Endothelial cell of umbilical vein (primary cell): ENCODE measurements at regions of chrX and their contacts with region 1.

Region 1: DNA sequence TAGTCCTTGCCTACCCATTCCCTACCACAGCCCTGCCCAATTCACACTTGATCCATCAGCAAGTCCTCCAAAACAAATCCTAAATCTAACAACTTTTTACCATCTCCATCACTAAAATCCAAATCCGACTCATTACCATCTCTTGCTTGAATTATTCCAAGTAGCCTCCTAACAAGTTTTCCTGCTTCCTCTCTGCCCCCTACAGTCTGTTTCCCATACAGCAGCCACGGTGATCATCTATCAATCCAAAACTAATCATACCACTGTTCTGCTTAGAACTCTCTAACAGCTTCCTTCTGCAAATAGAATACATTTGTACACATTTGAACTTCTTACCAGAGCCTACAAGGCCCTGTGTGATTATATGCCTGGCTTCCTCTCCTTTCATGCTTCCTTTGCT is 133.0 kb downstream of the SHROOM4 start:
- DNase-seq: peak; percentile 63
- H3K4me3 ChIP-seq: no peak overlapping the region
- H3K27ac ChIP-seq: no peak overlapping the region
- H3K4me1 ChIP-seq: peaks cover 31% of the 10 kb centered on the region
- H3K27me3 ChIP-seq: no peaks in the 10 kb centered on the region
- CTCF ChIP-seq: peak; percentile 39 to 54
- POLR2A ChIP-seq: no peak

Region 2: DNA sequence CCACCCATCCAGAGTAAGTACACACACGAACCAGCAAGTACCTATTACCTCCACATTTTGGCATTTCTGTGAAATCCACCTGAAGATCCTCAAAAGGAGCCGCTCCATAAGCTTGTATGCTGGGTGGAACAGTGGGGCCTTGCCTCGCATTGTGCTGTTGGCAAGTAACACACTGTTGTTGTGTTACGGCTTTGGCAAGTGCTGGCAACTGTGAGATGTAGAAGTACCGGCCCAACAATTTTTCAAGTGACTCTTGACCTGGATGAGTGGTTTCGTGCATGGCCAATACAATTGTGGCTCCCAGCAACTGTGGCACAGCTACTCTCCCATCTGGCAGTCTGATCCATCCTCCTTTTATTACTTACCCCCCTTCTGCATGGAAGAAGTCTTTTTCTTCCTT is 347.7 kb before region 1 on chrX:
- CTCF ChIA-PET with region 1: no interaction called
- POLR2A ChIA-PET with region 1: no interaction called
- dilution Hi-C with region 1: no loop called
- intact Hi-C with region 1: loop called (anchors 10 kb)
- DNase-seq: no peak
- H3K4me3 ChIP-seq: no peak overlapping the region
- H3K27ac ChIP-seq: no peak overlapping the region
- H3K4me1 ChIP-seq: no peaks in the 10 kb centered on the region
- H3K27me3 ChIP-seq: no peaks in the 10 kb centered on the region
- CTCF ChIP-seq: no peak
- POLR2A ChIP-seq: no peak

Region 3: GRCh38 chrX:50470103-50471031 is 210.6 kb before region 1 on chrX and contains the start of gene DGKK:
- CTCF ChIA-PET with region 1: no interaction called
- POLR2A ChIA-PET with region 1: no interaction called
- dilution Hi-C with region 1: no loop called
- intact Hi-C with region 1: loop called (anchors 10 kb)
- DNase-seq: no peak
- H3K4me3 ChIP-seq: no peak within 1 kb of the TSS
- H3K27ac ChIP-seq: no peak within 1 kb of the TSS
- H3K4me1 ChIP-seq: no peaks in the 10 kb centered on the region
- H3K27me3 ChIP-seq: peaks cover 41 to 55% of the 10 kb centered on the region in 2 experiments
- CTCF ChIP-seq: no peak
- POLR2A ChIP-seq: no peak
- total RNA-seq, gene DGKK: not detected in 2 replicates

Region 4: DNA sequence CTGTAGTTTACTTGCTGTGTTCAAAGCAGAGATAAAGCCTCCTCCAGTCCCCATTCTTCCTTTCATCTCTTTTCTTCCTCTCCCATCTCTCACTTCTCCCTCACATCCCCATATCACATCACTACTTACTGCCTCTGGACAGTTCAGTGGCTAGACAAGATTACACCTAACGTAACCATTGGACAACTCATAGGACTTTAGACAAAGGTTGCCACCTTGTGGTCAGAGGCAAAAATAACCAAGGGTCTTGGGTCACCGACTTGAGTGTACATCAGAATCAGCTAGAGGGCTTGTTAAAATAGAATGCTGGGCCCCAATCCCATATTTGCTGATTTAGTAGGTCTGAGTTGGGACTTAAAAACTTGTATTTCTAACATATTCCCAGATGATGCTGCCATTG is 101.0 kb before region 1 on chrX:
- CTCF ChIA-PET with region 1: interaction called, 17 read pairs
- POLR2A ChIA-PET with region 1: no interaction called
- dilution Hi-C with region 1: no loop called
- intact Hi-C with region 1: no loop called
- DNase-seq: peak; percentile 49
- H3K4me3 ChIP-seq: no peak overlapping the region
- H3K27ac ChIP-seq: no peak overlapping the region
- H3K4me1 ChIP-seq: no peaks in the 10 kb centered on the region
- H3K27me3 ChIP-seq: no peaks in the 10 kb centered on the region
- CTCF ChIP-seq: peak; percentile 34 to 35
- POLR2A ChIP-seq: no peak

Region 5: GRCh38 chrX:50594788-50595187 is 86.2 kb before region 1 on chrX:
- CTCF ChIA-PET with region 1: interaction called, 9 read pairs
- POLR2A ChIA-PET with region 1: no interaction called
- dilution Hi-C with region 1: no loop called
- intact Hi-C with region 1: loop called (anchors 2 kb)
- DNase-seq: peak; percentile 74
- H3K4me3 ChIP-seq: no peak overlapping the region
- H3K27ac ChIP-seq: peak overlapping the region; percentile 93
- H3K4me1 ChIP-seq: peaks cover 25% of the 10 kb centered on the region
- H3K27me3 ChIP-seq: no peaks in the 10 kb centered on the region
- CTCF ChIP-seq: no peak
- POLR2A ChIP-seq: no peak

Region 6: GRCh38 chrX:50606300-50606950 is 74.6 kb before region 1 on chrX:
- CTCF ChIA-PET with region 1: interaction called, 11 read pairs
- POLR2A ChIA-PET with region 1: no interaction called
- dilution Hi-C with region 1: no loop called
- intact Hi-C with region 1: loop called (anchors 2 kb)
- DNase-seq: no peak
- H3K4me3 ChIP-seq: no peak overlapping the region
- H3K27ac ChIP-seq: no peak overlapping the region
- H3K4me1 ChIP-seq: peaks cover 9% of the 10 kb centered on the region
- H3K27me3 ChIP-seq: no peaks in the 10 kb centered on the region
- CTCF ChIP-seq: no peak
- POLR2A ChIP-seq: no peak

Region 7: GRCh38 chrX:50643525-50644137 is 37.4 kb before region 1 on chrX:
- CTCF ChIA-PET with region 1: interaction called, 15 read pairs
- POLR2A ChIA-PET with region 1: interaction called, 3 read pairs
- dilution Hi-C with region 1: no loop called
- intact Hi-C with region 1: loop called (anchors 1 kb)
- DNase-seq: peak; percentile 91
- H3K4me3 ChIP-seq: peak overlapping the region; percentile 11 to 82 (median 63)
- H3K27ac ChIP-seq: peak overlapping the region; percentile 92
- H3K4me1 ChIP-seq: peaks cover 73% of the 10 kb centered on the region
- H3K27me3 ChIP-seq: no peaks in the 10 kb centered on the region
- CTCF ChIP-seq: peak; percentile 5 to 29
- POLR2A ChIP-seq: peak; percentile 85